ENCODE measurements at regions of chr10 and their contacts with region 1.

Region 1: GRCh38 chr10:43396928-43397624 is 11.9 kb downstream of the HNRNPF start:
- DNase-seq: peak; percentile 83
- ATAC-seq: peak; percentile 62
- H3K4me3 Mint-ChIP-seq: peak overlapping the region; percentile 80
- H3K27ac Mint-ChIP-seq: peak overlapping the region; percentile 99
- H3K4me1 Mint-ChIP-seq: peaks cover 66% of the 10 kb centered on the region
- H3K27me3 Mint-ChIP-seq: no peaks in the 10 kb centered on the region; the same call in 1 of the 2 replicates
- CTCF ChIP-seq: no peak

Region 2: DNA sequence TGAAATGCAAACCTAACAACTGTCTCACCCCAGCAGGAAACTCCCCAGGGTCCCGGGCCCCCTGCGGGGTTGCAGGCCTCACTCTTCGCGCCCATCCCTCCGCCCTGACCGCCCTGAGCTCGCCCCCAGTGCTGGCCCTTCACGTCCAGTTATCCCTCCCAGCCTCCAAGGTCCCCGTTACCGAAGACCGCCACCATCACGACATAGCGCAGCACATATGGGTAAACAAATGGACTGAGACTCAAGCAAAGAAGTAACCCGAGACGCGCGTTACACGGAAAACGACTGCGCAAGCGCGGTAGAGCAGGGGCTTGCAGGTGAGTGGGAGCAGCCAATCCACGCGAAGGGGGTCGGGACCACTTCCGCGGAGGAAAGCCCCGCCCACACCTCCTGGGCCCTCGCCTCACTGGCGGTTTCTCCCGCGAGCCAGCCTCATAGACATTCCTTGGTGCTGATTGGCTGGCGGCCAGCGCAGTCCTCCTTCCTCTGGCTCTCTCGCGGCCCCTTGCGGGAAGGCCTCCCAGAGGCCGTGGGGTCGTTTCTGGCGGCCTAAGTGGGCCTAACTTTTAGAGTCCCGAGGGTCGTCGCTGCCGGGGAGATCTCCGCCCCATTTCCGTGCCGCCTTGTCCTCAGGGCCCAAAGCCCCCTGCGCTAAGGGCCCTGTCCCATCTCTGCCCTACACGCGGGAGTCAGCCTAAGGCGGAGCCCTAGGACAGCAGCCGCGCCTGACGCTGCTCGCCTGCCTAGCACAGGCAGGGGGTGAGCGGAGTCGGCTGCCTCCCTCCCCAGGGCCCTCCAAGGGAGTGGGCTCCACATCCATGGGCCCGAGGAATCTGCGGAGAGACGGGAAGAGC is 34.9 kb before region 1 on chr10:
- CTCF ChIA-PET with region 1: no interaction called
- POLR2A ChIA-PET with region 1: interaction called, 10 read pairs
- DNase-seq: peak; percentile 96
- ATAC-seq: peak; percentile 97
- H3K4me3 Mint-ChIP-seq: peak overlapping the region; percentile 90
- H3K27ac Mint-ChIP-seq: peak overlapping the region; percentile 78
- H3K4me1 Mint-ChIP-seq: peaks cover 10% of the 10 kb centered on the region
- H3K27me3 Mint-ChIP-seq: peaks cover 13% of the 10 kb centered on the region; the same call in 1 of the 2 replicates
- CTCF ChIP-seq: no peak

Region 3: GRCh38 chr10:43407576-43408330 is 10.7 kb after region 1 on chr10:
- CTCF ChIA-PET with region 1: interaction called, 14 read pairs
- POLR2A ChIA-PET with region 1: interaction called, 19 read pairs
- DNase-seq: peak; percentile 58
- ATAC-seq: peak; percentile 3; the same call in 1 of the 2 replicates
- H3K4me3 Mint-ChIP-seq: peak overlapping the region; percentile 92
- H3K27ac Mint-ChIP-seq: peak overlapping the region; percentile 96
- H3K4me1 Mint-ChIP-seq: peaks cover 45% of the 10 kb centered on the region
- H3K27me3 Mint-ChIP-seq: no peaks in the 10 kb centered on the region
- CTCF ChIP-seq: no peak